A673 (cell line): ENCODE measurements at regions of chr7 and their contacts with region 1.

Region 1: GRCh38 chr7:148472406-148472805 is 118.2 kb upstream of the C7orf33 start:
- DNase-seq: no peak
- H3K4me3 ChIP-seq: no peak overlapping the region
- H3K27ac ChIP-seq: no peak overlapping the region
- H3K4me1 ChIP-seq: no peaks in the 10 kb centered on the region
- H3K27me3 ChIP-seq: no peaks in the 10 kb centered on the region
- CTCF ChIP-seq: no peak

Region 2: DNA sequence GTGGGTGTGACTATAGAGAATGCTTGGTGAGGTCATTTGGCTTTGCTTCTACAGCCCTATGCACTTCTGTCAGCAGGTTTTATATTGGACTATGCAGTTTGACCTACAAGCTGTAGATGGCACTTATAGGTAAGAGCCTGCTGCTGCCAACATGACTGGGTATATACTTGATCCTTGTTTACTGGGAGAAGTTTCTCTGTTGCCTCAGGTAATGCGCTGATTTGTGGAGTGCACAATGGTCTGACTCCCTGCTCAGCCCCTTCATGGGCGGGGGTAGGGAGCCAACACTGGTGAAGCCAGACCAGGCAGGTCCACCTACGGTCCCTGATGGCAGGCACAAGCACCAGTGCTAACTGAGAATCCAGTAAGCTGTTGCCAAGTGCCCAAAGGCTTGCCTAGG is 84.5 kb after region 1 on chr7:
- CTCF ChIA-PET with region 1: interaction called, 13 read pairs
- POLR2A ChIA-PET with region 1: no interaction called
- intact Hi-C with region 1: no loop called
- DNase-seq: no peak
- H3K4me3 ChIP-seq: no peak overlapping the region
- H3K27ac ChIP-seq: no peak overlapping the region
- H3K4me1 ChIP-seq: no peaks in the 10 kb centered on the region
- H3K27me3 ChIP-seq: no peaks in the 10 kb centered on the region
- CTCF ChIP-seq: no peak